WTC11 (cell line): ENCODE measurements at regions of chr15 and their contacts with region 1.

Region 1: DNA sequence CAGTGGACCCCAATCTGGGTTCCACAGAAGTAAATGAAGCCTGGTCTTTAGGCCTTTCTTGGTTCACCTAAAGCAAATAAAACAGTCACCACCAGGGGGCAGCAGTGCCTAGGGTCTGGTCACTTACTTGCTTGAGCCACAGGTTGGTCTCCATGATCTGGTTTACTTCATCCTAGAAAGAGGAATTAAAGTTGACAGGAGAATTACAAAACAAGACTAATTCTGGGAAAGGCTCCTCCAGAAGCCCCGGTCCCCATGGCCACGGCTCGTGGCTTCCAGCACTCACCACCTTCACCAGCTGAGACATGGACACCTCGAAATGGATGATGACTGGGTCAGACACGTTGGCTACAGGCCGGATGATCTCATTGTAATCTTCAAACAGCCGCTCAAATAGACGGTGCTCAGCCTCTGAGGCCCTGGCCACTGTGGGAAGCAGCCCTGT is 2.3 kb downstream of the CHRNA3 start:
- DNase-seq: peak; percentile 94
- ATAC-seq: peak; percentile 24
- H3K4me3 Mint-ChIP-seq: peak overlapping the region; percentile 33
- H3K27ac Mint-ChIP-seq: no peak overlapping the region
- H3K4me1 Mint-ChIP-seq: peaks cover 23% of the 10 kb centered on the region
- H3K27me3 Mint-ChIP-seq: peaks cover 48% of the 10 kb centered on the region
- CTCF ChIP-seq: peak; percentile 66

Region 2: GRCh38 chr15:78565097-78565951 is 53.2 kb before region 1 on chr15 and contains the start of gene CHRNA5:
- CTCF ChIA-PET with region 1: interaction called, 18 read pairs
- POLR2A ChIA-PET with region 1: interaction called, 3 read pairs
- DNase-seq: peak; percentile 100
- ATAC-seq: peak; percentile 96
- H3K4me3 Mint-ChIP-seq: peak within 1 kb of the TSS; percentile 90
- H3K27ac Mint-ChIP-seq: peak within 1 kb of the TSS; percentile 80
- H3K4me1 Mint-ChIP-seq: peaks cover 23% of the 10 kb centered on the region
- H3K27me3 Mint-ChIP-seq: no peaks in the 10 kb centered on the region; the same call in 1 of the 2 replicates
- CTCF ChIP-seq: no peak
- total RNA-seq, gene CHRNA5: 21.0 to 23.3 TPM (median 21.2 TPM) in 3 replicates

Region 3: GRCh38 chr15:78709263-78709882 is 90.9 kb after region 1 on chr15:
- CTCF ChIA-PET with region 1: interaction called, 42 read pairs
- POLR2A ChIA-PET with region 1: no interaction called
- DNase-seq: peak; percentile 90
- ATAC-seq: peak; percentile 100
- H3K4me3 Mint-ChIP-seq: no peak overlapping the region
- H3K27ac Mint-ChIP-seq: no peak overlapping the region
- H3K4me1 Mint-ChIP-seq: peaks cover 9% of the 10 kb centered on the region
- H3K27me3 Mint-ChIP-seq: peaks cover 19% of the 10 kb centered on the region
- CTCF ChIP-seq: peak; percentile 91

Region 4: GRCh38 chr15:78750566-78750965 is 132.1 kb after region 1 on chr15:
- CTCF ChIA-PET with region 1: interaction called, 36 read pairs
- POLR2A ChIA-PET with region 1: no interaction called
- DNase-seq: no peak
- ATAC-seq: no peak
- H3K4me3 Mint-ChIP-seq: peak overlapping the region; percentile 58
- H3K27ac Mint-ChIP-seq: no peak overlapping the region
- H3K4me1 Mint-ChIP-seq: peaks cover 4% of the 10 kb centered on the region
- H3K27me3 Mint-ChIP-seq: no peaks in the 10 kb centered on the region
- CTCF ChIP-seq: no peak